ENCODE measurements at regions of chr11 and their contacts with region 1.

Region 1: DNA sequence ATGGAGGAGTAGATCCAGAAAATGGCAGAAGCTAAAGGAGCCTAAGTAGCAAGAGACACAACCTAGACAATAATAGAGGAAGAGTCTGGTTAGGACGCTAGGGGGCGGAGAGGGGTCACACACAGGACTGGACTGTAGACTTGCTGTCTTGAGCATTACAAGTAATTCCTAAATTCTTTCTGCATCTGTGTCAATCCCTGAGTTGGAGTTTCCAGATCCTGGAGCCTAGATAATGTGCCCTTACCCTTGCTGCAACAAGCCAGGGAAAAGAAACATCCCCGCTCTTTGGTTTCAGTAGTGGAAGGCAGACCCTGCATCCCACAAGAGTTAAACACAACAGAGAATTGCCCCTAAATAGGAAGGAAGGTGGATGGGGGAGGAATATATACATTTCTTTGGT is 14.9 kb upstream of the CCDC73 start:
- DNase-seq: no peak
- ATAC-seq: peak; percentile 100
- H3K4me3 ChIP-seq: no peak overlapping the region
- H3K27ac ChIP-seq: no peak overlapping the region
- H3K4me1 ChIP-seq: no peaks in the 10 kb centered on the region
- H3K27me3 ChIP-seq: no peaks in the 10 kb centered on the region
- CTCF ChIP-seq: peak; percentile 85 to 86 (median 86)
- EP300 ChIP-seq: no peak
- POLR2A ChIP-seq: no peak
- RAD21 ChIP-seq: peak; percentile 83

Region 2: GRCh38 chr11:32829680-32830412 is 20.5 kb after region 1 on chr11 and contains the start of gene PRRG4:
- CTCF ChIA-PET with region 1: interaction called, 17 read pairs
- POLR2A ChIA-PET with region 1: interaction called, 4 read pairs
- RAD21 ChIA-PET with region 1: interaction called, 11 read pairs
- SMC1A ChIA-PET with region 1: interaction called, 5 read pairs
- in situ Hi-C with region 1: no loop called
- intact Hi-C with region 1: no loop called
- DNase-seq: no peak
- ATAC-seq: peak; percentile 90
- H3K4me3 ChIP-seq: peak within 1 kb of the TSS; percentile 84
- H3K27ac ChIP-seq: peak within 1 kb of the TSS; percentile 76
- H3K4me1 ChIP-seq: no peaks in the 10 kb centered on the region; the same call in 1 of the 2 replicates
- H3K27me3 ChIP-seq: no peaks in the 10 kb centered on the region; a peak in 1 of 4 replicates
- CTCF ChIP-seq: no peak
- EP300 ChIP-seq: no peak
- POLR2A ChIP-seq: peak; percentile 72
- RAD21 ChIP-seq: no peak
- polyA plus RNA-seq, gene PRRG4: 1.0 to 1.1 TPM

Region 3: DNA sequence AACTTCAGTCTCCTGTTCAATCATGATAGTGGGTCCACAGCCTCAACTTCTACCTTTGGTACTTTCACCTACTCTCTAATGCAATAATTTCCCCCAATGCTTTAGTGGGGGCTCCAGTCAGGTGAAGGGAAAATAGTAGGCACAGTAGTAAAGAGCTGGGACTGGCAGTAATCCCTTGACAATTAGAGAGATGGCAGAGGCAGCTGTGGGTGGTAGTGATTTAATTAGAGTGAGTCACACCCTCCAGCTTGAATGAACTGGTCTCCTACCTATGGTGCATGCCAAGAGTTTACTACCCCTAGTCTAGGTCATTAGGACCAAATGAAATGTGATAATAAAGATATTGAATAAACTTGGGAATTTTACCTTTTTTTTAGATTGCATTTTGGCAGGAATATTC is 29.2 kb after region 1 on chr11:
- CTCF ChIA-PET with region 1: interaction called, 17 read pairs
- POLR2A ChIA-PET with region 1: no interaction called
- RAD21 ChIA-PET with region 1: interaction called, 4 read pairs
- SMC1A ChIA-PET with region 1: interaction called, 10 read pairs
- in situ Hi-C with region 1: no loop called
- intact Hi-C with region 1: no loop called
- DNase-seq: no peak
- ATAC-seq: peak; percentile 68
- H3K4me3 ChIP-seq: no peak overlapping the region
- H3K27ac ChIP-seq: no peak overlapping the region
- H3K4me1 ChIP-seq: no peaks in the 10 kb centered on the region
- H3K27me3 ChIP-seq: no peaks in the 10 kb centered on the region
- CTCF ChIP-seq: no peak
- EP300 ChIP-seq: no peak
- POLR2A ChIP-seq: no peak
- RAD21 ChIP-seq: no peak

Region 4: DNA sequence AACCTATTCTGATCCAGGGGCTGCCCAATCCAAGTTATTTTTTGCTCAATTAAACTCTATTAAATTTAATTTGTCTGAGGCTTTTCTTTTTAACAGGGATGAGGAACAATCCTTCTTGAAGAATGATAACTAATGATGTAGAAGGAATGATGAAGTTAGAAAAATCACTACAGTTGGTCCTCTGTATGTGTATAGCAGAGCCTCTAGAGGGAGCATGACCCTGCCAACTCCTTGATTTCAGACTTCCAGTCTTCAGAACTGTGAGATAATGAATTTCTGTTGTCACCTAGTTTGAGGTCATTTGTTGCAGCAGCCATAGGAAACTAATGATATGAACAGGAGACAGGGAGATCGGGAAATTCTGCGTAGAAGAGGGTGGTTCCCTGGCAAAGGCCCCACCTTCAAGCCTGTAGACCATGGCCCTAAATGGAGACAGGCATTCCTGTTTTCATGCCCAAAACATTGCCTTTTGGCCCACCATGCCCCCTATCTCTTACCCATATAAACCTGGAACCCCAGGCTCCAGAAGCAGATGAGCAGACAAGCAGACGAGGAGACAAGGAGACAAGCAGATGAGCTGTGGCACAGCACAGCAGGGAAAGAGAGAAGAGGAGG is 75.6 kb after region 1 on chr11:
- CTCF ChIA-PET with region 1: interaction called, 9 read pairs
- POLR2A ChIA-PET with region 1: no interaction called
- RAD21 ChIA-PET with region 1: interaction called, 11 read pairs
- SMC1A ChIA-PET with region 1: interaction called, 8 read pairs
- in situ Hi-C with region 1: no loop called
- intact Hi-C with region 1: no loop called
- DNase-seq: no peak
- ATAC-seq: peak; percentile 89
- H3K4me3 ChIP-seq: no peak overlapping the region
- H3K27ac ChIP-seq: no peak overlapping the region
- H3K4me1 ChIP-seq: no peaks in the 10 kb centered on the region
- H3K27me3 ChIP-seq: no peaks in the 10 kb centered on the region
- CTCF ChIP-seq: peak; percentile 60 to 63 (median 61)
- EP300 ChIP-seq: no peak
- POLR2A ChIP-seq: no peak
- RAD21 ChIP-seq: peak; percentile 52

Region 5: DNA sequence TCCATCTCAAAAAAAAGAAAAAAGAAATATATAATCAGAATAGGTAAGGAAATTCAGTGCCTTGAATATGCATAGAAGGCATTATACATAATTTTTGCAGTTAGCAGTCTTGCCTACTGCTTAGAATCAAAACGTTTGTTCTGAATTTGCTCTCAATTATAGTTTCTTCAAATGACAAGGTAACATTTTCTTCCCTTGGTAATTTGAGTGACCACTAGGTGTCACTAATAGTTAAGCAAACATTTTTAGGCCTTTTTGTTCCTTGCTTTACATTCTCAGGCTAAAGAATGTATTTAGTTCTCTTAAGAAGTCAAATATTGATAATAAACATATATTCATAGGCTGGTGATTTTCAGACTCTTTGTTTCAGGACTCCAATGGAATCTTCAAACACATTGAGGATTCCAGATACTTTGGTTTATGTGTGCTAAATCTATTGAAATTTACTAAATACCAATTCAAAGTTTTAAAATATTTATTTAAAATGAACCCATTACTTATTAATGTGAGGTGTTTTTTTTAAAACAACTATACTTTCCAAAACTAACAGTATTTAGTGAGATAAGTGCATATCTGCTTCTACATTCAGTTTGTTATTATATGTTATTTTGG is 151.3 kb after region 1 on chr11:
- CTCF ChIA-PET with region 1: interaction called, 11 read pairs
- POLR2A ChIA-PET with region 1: no interaction called
- RAD21 ChIA-PET with region 1: interaction called, 5 read pairs
- SMC1A ChIA-PET with region 1: interaction called, 5 read pairs
- in situ Hi-C with region 1: no loop called
- intact Hi-C with region 1: no loop called
- DNase-seq: peak; percentile 21
- ATAC-seq: peak; percentile 65
- H3K4me3 ChIP-seq: no peak overlapping the region
- H3K27ac ChIP-seq: no peak overlapping the region
- H3K4me1 ChIP-seq: no peaks in the 10 kb centered on the region
- H3K27me3 ChIP-seq: no peaks in the 10 kb centered on the region
- CTCF ChIP-seq: peak; percentile 38 to 71 (median 59); a peak in 5 of 6 replicates
- EP300 ChIP-seq: no peak
- POLR2A ChIP-seq: no peak
- RAD21 ChIP-seq: peak; percentile 90

Measured in GM12878 (cell line).